Common myeloid progenitor, CD34-positive (primary cell): ENCODE measurements at regions of chr14 and their contacts with region 1.

Region 1: DNA sequence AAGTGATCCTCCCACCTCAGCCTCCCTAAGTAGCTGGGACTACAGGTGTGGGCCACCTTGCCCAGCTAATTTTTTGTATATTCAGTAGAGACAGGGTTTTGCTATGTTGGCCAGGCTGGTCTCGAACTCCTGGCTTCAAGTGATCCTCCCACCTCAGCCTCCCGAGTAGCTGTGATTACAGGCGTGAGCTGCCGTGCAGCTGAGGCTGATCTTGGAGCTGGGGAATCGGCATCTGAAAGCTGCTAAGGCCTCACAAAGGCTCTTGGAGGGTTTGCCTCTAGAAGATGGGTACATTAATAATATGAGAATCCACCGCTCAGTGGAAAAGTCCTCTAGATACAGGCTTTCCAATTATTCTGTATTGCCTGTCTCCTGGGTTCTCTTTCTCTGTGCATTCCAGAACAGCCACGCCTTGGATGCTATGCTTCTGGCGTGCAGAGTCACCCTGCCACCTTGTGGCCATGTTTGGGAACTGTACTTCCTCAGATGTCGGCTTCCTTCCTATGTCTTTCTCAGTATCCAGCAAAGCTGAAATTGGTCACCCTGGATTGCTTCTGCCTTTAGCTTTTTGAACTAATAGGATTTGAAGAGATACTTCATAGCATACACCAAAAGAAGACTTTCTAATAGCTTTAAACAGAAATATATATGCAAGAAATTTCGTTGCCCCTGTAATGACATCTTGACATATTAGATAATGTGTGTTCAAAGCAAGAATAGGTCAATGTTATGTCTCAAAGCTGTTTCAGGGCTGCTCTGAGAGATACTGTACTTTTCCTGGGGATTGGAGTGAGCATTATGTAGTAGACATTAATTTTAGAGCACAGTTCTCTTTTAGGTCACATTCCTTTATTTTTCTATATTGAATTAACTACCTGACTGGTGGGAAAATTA is 75.4 kb downstream of the SNAPC1 start:
- DNase-seq: peak; percentile 76 to 88 (median 81)
- H3K4me3 ChIP-seq: no peak overlapping the region
- H3K27ac ChIP-seq: no peak overlapping the region
- H3K4me1 ChIP-seq: no peaks in the 10 kb centered on the region
- H3K27me3 ChIP-seq: peaks cover 0 to 3% (median 0%) of the 10 kb centered on the region in 5 experiments

Region 2: GRCh38 chr14:61456720-61457119 is 380.9 kb before region 1 on chr14:
- CTCF ChIA-PET with region 1: interaction called, 36 read pairs
- POLR2A ChIA-PET with region 1: no interaction called
- DNase-seq: peak; percentile 74 to 89 (median 84)
- H3K4me3 ChIP-seq: no peak overlapping the region
- H3K27ac ChIP-seq: no peak overlapping the region
- H3K4me1 ChIP-seq: peaks cover 0 to 10% (median 3%) of the 10 kb centered on the region in 4 experiments
- H3K27me3 ChIP-seq: no peaks in the 10 kb centered on the region

Region 3: GRCh38 chr14:61461808-61462275 is 375.7 kb before region 1 on chr14:
- CTCF ChIA-PET with region 1: interaction called, 36 read pairs
- POLR2A ChIA-PET with region 1: no interaction called
- DNase-seq: peak; percentile 69 to 84 (median 80)
- H3K4me3 ChIP-seq: no peak overlapping the region
- H3K27ac ChIP-seq: no peak overlapping the region
- H3K4me1 ChIP-seq: peaks cover 0 to 16% (median 6%) of the 10 kb centered on the region in 4 experiments
- H3K27me3 ChIP-seq: no peaks in the 10 kb centered on the region